CD4-positive, alpha-beta memory T cell (primary cell): ENCODE measurements at regions of chr11 and their contacts with region 1.

Region 1: DNA sequence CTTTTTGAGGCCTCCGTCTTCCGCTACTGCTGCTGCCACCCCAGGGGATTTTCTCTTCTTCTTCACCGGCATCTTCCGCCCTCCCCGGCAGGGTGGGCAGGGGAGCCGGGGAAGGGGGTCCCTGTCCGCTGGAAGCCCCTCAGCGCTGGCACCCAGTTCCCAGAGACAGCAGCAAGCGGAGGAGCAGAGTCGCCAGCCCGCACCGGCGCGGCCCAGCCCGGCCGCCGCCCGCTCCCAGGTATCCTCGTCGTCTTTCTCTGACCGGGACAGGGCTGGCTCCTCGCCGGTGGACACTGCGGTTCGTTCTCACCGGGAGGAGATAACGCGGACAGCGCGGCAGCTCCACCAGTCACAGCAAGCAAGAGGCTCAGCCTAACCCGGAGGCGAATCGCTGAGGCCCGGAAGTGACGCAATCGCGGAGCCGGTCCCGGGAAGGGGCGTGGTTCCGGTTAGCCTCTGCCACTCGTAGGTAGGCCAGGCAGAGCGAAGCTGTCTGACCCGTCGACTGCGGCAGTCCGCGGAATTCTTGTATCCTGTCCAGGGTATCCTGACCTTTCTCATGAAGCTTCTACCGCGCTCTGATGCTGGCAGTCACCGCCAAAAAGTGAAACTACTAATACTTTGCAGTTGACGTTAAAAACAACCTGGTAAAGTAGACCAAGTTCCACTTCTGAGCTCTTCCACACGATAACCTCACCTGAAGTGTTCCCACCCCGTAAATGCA is at the start of gene DCUN1D5:
- DNase-seq: peak; percentile 92 to 95 (median 93)
- H3K4me3 ChIP-seq: peak within 1 kb of the TSS; percentile 47 to 58
- H3K4me3 Mint-ChIP-seq: peak within 1 kb of the TSS; percentile 86 to 97 (median 94)
- H3K27ac ChIP-seq: peak within 1 kb of the TSS; percentile 79
- H3K27ac Mint-ChIP-seq: peak within 1 kb of the TSS; percentile 92 to 99 (median 97)
- H3K4me1 ChIP-seq: peaks cover 36% of the 10 kb centered on the region
- H3K4me1 Mint-ChIP-seq: peaks cover 13 to 29% (median 25%) of the 10 kb centered on the region in 4 donors
- H3K27me3 ChIP-seq: no peaks in the 10 kb centered on the region
- H3K27me3 Mint-ChIP-seq: peaks cover 13 to 18% of the 10 kb centered on the region in 2 donors
- total RNA-seq, gene DCUN1D5: 14.4 TPM

Region 2: DNA sequence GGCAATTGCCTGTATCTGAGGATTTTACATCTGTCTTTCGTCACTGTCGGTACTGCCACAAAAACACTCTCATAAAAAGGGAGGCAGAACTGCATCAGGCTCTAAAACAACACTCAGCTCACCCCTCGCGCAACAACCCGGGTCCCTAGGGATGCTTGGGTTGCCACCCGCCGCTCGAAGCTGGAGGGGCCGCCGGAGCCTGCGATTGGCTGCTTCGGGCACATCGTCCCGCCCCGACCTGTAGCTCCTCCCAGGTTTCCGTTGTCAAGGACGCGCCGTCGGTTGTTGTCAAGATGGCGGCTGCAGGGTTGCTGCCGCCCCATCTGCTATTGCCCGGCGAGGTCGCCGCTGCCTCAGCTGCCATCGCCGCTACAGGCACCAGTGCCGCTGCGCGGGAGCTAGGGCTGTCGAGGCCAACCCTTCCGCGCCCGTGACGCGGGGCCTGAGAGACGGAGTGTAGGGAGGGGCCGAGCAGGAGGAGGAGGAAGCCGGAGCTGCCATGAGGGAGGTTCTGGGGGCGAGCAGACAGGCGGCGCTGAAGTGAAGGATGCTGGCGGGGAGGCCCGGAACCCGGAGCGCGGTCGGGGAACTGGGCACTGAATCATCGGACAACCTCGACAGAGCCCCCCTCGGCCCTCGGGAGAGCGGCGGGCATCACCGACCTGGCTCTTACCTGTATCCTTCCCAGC is 1177.1 kb before region 1 on chr11 and contains the start of gene CEP126:
- CTCF ChIA-PET with region 1: no interaction called
- POLR2A ChIA-PET with region 1: no interaction called
- intact Hi-C with region 1: loop called (anchors 2 kb)
- DNase-seq: peak; percentile 91 to 94 (median 93)
- H3K4me3 ChIP-seq: peak within 1 kb of the TSS; percentile 43 to 64
- H3K4me3 Mint-ChIP-seq: peak within 1 kb of the TSS; percentile 88 to 96 (median 94)
- H3K27ac ChIP-seq: peak within 1 kb of the TSS; percentile 60
- H3K27ac Mint-ChIP-seq: peak within 1 kb of the TSS; percentile 89 to 94 (median 92)
- H3K4me1 ChIP-seq: peaks cover 18% of the 10 kb centered on the region
- H3K4me1 Mint-ChIP-seq: peaks cover 18 to 25% (median 22%) of the 10 kb centered on the region in 4 donors
- H3K27me3 ChIP-seq: no peaks in the 10 kb centered on the region
- H3K27me3 Mint-ChIP-seq: peaks cover 0 to 5% of the 10 kb centered on the region in 2 donors
- total RNA-seq, gene CEP126: 2.4 to 2.6 TPM

Region 3: GRCh38 chr11:103035791-103036434 is 56.0 kb before region 1 on chr11:
- CTCF ChIA-PET with region 1: no interaction called
- POLR2A ChIA-PET with region 1: interaction called, 5 read pairs
- intact Hi-C with region 1: loop called (anchors 2 kb)
- DNase-seq: peak; percentile 54 to 74 (median 64)
- H3K4me3 ChIP-seq: no peak overlapping the region
- H3K4me3 Mint-ChIP-seq: peak overlapping the region in 4 of 8 donors; percentile 9 to 43 (median 27)
- H3K27ac ChIP-seq: no peak overlapping the region
- H3K27ac Mint-ChIP-seq: peak overlapping the region in 6 of 7 donors; percentile 12 to 81 (median 38)
- H3K4me1 ChIP-seq: peaks cover 8% of the 10 kb centered on the region
- H3K4me1 Mint-ChIP-seq: peaks cover 6 to 8% (median 6%) of the 10 kb centered on the region in 4 donors
- H3K27me3 ChIP-seq: no peaks in the 10 kb centered on the region
- H3K27me3 Mint-ChIP-seq: peaks cover 0 to 2% of the 10 kb centered on the region in 2 donors

Region 4: DNA sequence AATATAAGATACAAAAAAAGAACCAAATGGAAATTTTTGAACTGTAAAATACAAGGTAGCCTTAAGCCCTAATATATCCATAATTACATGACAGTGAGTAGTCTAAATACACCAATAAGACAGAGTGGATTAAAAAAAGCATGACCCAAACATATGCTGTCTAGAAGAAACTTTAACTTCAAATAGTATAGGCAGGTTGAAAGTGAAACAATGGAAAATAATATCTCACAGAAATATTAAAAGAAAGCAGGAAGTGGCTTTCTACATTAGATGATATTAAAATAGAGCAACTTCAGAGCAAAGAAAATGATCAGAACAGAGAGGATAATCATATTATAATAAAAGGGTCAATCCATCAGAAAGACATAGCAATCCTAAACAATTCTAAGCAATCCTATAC is 21.8 kb before region 1 on chr11:
- CTCF ChIA-PET with region 1: no interaction called
- POLR2A ChIA-PET with region 1: interaction called, 8 read pairs
- intact Hi-C with region 1: loop called (anchors 2 kb)
- DNase-seq: peak in 3 of 5 donors; percentile 4 to 17 (median 16)
- H3K4me3 ChIP-seq: no peak overlapping the region
- H3K4me3 Mint-ChIP-seq: peak overlapping the region in 7 of 8 donors; percentile 45 to 68 (median 59)
- H3K27ac ChIP-seq: peak overlapping the region; percentile 9
- H3K27ac Mint-ChIP-seq: peak overlapping the region; percentile 53 to 88 (median 78)
- H3K4me1 ChIP-seq: peaks cover 31% of the 10 kb centered on the region
- H3K4me1 Mint-ChIP-seq: peaks cover 29 to 47% (median 37%) of the 10 kb centered on the region in 4 donors
- H3K27me3 ChIP-seq: no peaks in the 10 kb centered on the region
- H3K27me3 Mint-ChIP-seq: no peaks in the 10 kb centered on the region